ENCODE measurements at regions of chr6 and their contacts with region 1.

Region 1: GRCh38 chr6:152863618-152864326 is 113.2 kb downstream of the VIP start:
- DNase-seq: peak; percentile 48 to 88 (median 56)
- ATAC-seq: peak; percentile 97
- H3K4me3 ChIP-seq: no peak overlapping the region
- H3K27ac ChIP-seq: no peak overlapping the region
- H3K4me1 ChIP-seq: peaks cover 0 to 3% of the 10 kb centered on the region in 2 experiments; a peak in 1 of 5 replicates
- H3K27me3 ChIP-seq: no peaks in the 10 kb centered on the region
- CTCF ChIP-seq: peak; percentile 64 to 91 (median 73)
- EP300 ChIP-seq: no peak
- POLR2A ChIP-seq: no peak
- RAD21 ChIP-seq: peak; percentile 83 to 91

Region 2: DNA sequence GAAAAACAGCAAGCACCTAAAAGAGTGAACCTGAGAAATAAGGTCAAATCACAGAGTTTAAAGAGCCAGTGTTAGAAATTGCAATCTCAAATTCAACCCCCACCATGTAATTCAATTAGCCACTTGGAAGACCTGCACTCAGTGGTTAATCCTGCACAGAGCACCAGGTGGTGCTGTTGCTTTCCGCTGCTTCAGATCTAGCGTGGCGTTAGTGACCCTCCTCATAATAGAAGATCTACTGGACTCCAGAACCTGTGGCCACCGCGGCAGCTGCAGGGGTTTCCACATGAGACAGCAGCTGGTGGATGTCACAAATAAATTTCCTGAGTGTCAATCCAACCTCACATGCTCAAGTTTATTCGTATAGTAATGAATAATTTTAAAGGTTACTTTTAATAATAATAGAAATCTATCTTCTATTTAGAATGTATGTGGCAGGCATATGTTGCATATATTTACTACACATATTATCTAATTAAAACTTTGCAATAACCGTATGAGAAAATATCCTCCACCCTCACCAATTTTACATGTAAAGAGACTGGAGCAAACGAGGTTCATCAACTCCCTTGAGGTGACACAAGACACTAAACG is 311.1 kb before region 1 on chr6:
- CTCF ChIA-PET with region 1: no interaction called
- POLR2A ChIA-PET with region 1: no interaction called
- in situ Hi-C with region 1: no loop called
- intact Hi-C with region 1: loop called (anchors 1 kb)
- DNase-seq: peak; percentile 24 to 50 (median 44)
- ATAC-seq: peak; percentile 78
- H3K4me3 ChIP-seq: no peak overlapping the region
- H3K27ac ChIP-seq: no peak overlapping the region
- H3K4me1 ChIP-seq: no peaks in the 10 kb centered on the region
- H3K27me3 ChIP-seq: no peaks in the 10 kb centered on the region
- CTCF ChIP-seq: peak; percentile 43 to 58 (median 47)
- EP300 ChIP-seq: no peak
- POLR2A ChIP-seq: no peak
- RAD21 ChIP-seq: peak; percentile 40 to 60; a peak in 3 of 4 replicates

Region 3: DNA sequence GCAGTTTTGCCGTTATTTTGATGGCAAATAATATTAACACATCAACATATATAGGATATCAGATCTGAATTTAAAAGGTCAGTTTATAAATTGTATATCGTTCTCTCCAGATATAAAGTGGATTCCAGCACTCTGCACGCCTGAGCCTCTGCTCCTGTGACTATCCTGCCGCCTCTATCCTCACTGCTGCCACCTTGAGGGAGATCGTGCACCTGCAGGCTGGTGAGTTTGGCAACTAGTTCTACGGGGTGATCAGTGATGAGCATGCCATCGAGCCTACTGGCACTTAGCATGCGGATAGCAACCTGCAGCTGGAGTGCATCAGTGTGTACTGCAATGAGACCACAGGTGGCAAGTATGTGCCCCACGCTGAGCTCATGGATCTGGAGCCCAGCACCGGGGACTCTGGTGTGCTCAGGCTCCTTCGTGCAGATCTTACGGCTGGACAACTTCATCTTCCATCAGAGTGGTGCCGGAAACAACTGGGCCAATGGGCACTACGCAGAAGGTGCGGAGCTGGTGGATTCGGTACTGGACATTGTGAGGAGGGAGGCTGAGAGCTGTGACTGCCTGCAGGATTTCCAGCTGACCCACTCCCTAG is 34.1 kb after region 1 on chr6:
- CTCF ChIA-PET with region 1: interaction called, 3 read pairs
- POLR2A ChIA-PET with region 1: no interaction called
- in situ Hi-C with region 1: no loop called
- intact Hi-C with region 1: loop called (anchors 1 kb)
- DNase-seq: peak; percentile 77 to 85 (median 81)
- ATAC-seq: peak; percentile 99
- H3K4me3 ChIP-seq: no peak overlapping the region
- H3K27ac ChIP-seq: no peak overlapping the region
- H3K4me1 ChIP-seq: peaks cover 0 to 4% of the 10 kb centered on the region in 2 experiments; a peak in 1 of 5 replicates
- H3K27me3 ChIP-seq: peaks cover 3 to 22% of the 10 kb centered on the region in 2 experiments; a peak in 3 of 5 replicates
- CTCF ChIP-seq: peak; percentile 81 to 95 (median 83)
- EP300 ChIP-seq: no peak
- POLR2A ChIP-seq: no peak
- RAD21 ChIP-seq: peak; percentile 33 to 71